ENCODE measurements at regions of chr10 and their contacts with region 1.

Region 1: GRCh38 chr10:110547139-110547761 is 20.2 kb upstream of the SMC3 start:
- DNase-seq: no peak
- ATAC-seq: peak; percentile 77
- H3K4me3 Mint-ChIP-seq: no peak overlapping the region
- H3K27ac Mint-ChIP-seq: no peak overlapping the region
- H3K4me1 Mint-ChIP-seq: peaks cover 10% of the 10 kb centered on the region
- H3K27me3 Mint-ChIP-seq: peaks cover 21% of the 10 kb centered on the region
- CTCF ChIP-seq: peak; percentile 91

Region 2: DNA sequence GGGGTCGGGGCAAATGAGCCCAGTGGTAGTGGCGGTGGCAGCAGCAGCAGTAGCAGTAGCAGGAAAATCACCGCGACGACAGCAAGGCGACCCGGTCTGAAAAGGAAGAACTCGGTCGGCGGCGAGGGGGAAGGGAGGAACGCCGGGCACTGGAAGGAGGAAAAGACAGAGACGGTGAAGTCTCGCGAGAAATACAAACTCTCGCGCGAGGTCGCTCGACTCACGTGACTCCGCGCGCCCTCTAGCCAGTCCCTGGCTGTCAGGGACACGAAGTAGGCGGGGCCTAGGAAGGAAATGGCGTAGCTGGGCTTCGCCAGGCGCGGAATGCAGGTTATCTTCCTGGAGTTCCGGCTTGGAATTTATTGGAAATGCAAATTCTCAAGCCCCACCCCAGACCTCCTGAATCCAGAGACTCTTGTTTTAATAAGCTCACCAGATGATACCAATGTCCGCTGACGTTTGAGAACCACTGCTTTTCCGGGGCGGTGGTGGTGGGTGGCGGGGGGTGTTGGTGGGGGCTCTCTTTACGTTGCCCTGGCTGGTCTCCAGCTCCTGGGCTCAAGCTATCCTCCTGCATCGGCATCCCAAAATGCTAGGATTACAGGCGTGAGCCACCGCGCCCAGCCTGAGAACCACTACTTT is 242.3 kb before region 1 on chr10 and contains the start of gene SMNDC1:
- CTCF ChIA-PET with region 1: interaction called, 55 read pairs
- POLR2A ChIA-PET with region 1: interaction called, 4 read pairs
- intact Hi-C with region 1: loop called (anchors 1 kb)
- DNase-seq: peak; percentile 98
- ATAC-seq: peak; percentile 93
- H3K4me3 Mint-ChIP-seq: peak within 1 kb of the TSS; percentile 93
- H3K27ac Mint-ChIP-seq: peak within 1 kb of the TSS; percentile 98
- H3K4me1 Mint-ChIP-seq: peaks cover 43% of the 10 kb centered on the region
- H3K27me3 Mint-ChIP-seq: no peaks in the 10 kb centered on the region
- CTCF ChIP-seq: no peak
- total RNA-seq, gene SMNDC1: 39.7 to 42.4 TPM

Region 3: GRCh38 chr10:110354322-110354766 is 192.9 kb before region 1 on chr10:
- CTCF ChIA-PET with region 1: interaction called, 38 read pairs
- POLR2A ChIA-PET with region 1: interaction called, 3 read pairs
- intact Hi-C with region 1: loop called (anchors 5 kb)
- DNase-seq: peak; percentile 95
- ATAC-seq: peak; percentile 40
- H3K4me3 Mint-ChIP-seq: no peak overlapping the region
- H3K27ac Mint-ChIP-seq: peak overlapping the region; percentile 87
- H3K4me1 Mint-ChIP-seq: peaks cover 60% of the 10 kb centered on the region
- H3K27me3 Mint-ChIP-seq: peaks cover 2% of the 10 kb centered on the region
- CTCF ChIP-seq: peak; percentile 90

Region 4: DNA sequence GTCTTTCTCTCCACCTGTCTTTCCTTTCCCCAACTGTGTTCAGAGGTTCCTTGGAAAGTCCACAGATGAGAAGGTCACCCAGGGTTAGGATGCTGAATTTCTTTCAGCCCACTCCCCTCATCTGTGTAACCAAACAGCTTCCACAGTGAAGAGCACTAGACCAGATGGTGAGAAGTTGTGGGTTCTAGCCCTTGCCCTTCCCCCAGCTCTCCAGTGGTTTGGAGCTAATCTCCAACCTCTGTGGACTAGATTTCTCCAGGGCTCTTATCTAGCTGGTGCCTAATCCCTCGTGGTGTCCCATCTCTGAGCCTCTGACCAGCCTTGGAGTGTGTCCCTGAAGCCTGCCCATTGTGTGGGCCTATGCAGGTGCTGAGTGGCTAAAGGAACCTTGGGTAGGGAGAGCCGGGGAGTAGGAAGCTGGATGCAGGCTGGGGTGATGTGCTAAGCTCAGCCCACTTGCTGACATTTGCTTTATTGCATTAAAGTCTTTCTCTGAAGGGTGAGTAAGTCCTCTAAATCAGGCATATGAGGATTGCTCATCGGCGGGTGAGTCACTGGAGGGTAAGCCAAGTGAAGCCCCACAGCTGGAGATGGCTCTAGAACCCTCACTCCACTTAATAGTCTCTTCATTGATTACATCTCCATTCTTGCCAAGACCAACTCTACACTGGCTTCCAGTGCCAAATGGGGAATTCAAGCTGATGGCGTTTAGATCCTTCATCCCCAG is 34.6 kb before region 1 on chr10:
- CTCF ChIA-PET with region 1: interaction called, 12 read pairs
- POLR2A ChIA-PET with region 1: interaction called, 3 read pairs
- intact Hi-C with region 1: no loop called
- DNase-seq: peak; percentile 89
- ATAC-seq: peak; percentile 98
- H3K4me3 Mint-ChIP-seq: no peak overlapping the region
- H3K27ac Mint-ChIP-seq: peak overlapping the region; percentile 88
- H3K4me1 Mint-ChIP-seq: peaks cover 57% of the 10 kb centered on the region
- H3K27me3 Mint-ChIP-seq: no peaks in the 10 kb centered on the region
- CTCF ChIP-seq: no peak

Region 5: DNA sequence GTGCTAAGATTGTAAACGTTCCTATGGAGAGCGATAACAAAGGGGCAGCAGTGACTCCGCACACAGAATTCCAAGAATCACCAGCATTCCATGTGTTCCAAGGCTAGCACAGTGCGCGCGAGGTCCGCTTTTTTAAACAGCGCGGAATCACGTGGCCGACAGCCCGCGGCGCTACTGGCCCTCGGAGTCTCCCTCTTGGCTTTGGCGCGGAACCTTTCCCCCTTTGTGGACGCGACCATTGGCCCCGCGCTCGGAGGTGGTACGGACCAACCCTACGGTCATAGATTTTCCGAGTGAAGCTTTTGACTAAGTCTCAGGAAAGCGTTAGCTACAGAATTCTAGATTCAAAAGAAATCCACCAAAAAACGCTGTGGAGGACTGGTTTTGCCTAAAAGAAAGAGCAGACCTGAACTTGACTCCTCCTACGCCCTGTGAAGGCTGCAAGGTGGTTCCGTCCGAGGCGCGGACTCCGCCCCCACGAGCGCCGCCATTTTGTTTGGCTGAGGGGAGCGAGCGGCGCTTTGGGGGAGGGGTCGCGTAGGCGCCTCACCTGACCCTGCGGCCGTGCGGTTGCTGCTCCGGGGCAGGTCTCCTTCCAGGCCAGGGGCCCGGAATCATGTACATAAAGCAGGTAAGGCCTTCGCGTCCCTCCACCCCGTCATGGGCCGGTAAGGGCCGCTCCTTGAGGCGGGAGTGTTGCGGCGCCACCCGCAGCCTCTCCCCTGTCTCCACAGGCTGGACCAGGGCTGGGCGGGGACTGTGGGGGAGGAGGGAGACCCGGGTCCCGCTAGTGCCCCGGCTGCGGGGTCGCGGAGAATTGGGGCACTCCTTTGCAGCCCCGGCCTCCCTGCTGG is 20.2 kb after region 1 on chr10 and contains the start of gene SMC3:
- CTCF ChIA-PET with region 1: interaction called, 15 read pairs
- POLR2A ChIA-PET with region 1: interaction called, 11 read pairs
- intact Hi-C with region 1: no loop called
- DNase-seq: peak; percentile 93
- ATAC-seq: peak; percentile 86
- H3K4me3 Mint-ChIP-seq: peak within 1 kb of the TSS; percentile 98
- H3K27ac Mint-ChIP-seq: peak within 1 kb of the TSS; percentile 99
- H3K4me1 Mint-ChIP-seq: peaks cover 32% of the 10 kb centered on the region
- H3K27me3 Mint-ChIP-seq: peaks cover 20% of the 10 kb centered on the region
- CTCF ChIP-seq: no peak
- total RNA-seq, gene SMC3: 69.7 to 71.2 TPM

Region 6: GRCh38 chr10:110686949-110687348 is 139.7 kb after region 1 on chr10:
- CTCF ChIA-PET with region 1: no interaction called
- POLR2A ChIA-PET with region 1: no interaction called
- intact Hi-C with region 1: no loop called
- DNase-seq: no peak
- ATAC-seq: no peak
- H3K4me3 Mint-ChIP-seq: no peak overlapping the region
- H3K27ac Mint-ChIP-seq: no peak overlapping the region
- H3K4me1 Mint-ChIP-seq: no peaks in the 10 kb centered on the region
- H3K27me3 Mint-ChIP-seq: peaks cover 6% of the 10 kb centered on the region
- CTCF ChIP-seq: no peak

Region 7: DNA sequence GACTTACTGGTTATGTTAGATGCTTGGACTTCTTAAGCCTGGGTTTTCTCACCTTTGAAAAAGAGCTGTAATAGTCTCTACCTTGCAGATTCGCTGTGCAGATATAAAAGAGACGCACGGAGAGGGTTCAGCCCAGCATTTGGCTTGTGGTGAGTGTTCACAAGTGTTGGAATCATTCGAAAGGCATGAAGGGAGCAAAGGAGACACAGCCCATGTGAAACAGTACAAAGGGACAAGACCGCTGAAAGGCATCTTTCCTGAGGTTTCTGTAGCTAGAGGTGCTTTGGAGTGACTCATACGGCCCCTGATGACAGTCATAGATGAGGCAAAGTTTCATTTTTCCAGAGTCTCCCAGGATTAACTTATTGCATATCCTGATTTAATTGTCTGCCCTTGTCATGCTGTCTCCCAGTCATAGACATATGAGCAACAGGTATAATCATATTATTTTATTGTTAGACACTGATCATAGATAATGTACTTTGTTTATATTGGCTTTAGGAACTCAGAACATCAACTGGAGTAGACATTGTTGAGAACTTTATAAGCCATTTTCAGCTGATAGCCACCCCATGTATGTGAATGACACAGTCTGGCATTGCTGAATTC is 700.6 kb after region 1 on chr10:
- CTCF ChIA-PET with region 1: no interaction called
- POLR2A ChIA-PET with region 1: no interaction called
- intact Hi-C with region 1: no loop called
- DNase-seq: no peak
- ATAC-seq: no peak
- H3K4me3 Mint-ChIP-seq: no peak overlapping the region
- H3K27ac Mint-ChIP-seq: no peak overlapping the region
- H3K4me1 Mint-ChIP-seq: no peaks in the 10 kb centered on the region
- H3K27me3 Mint-ChIP-seq: peaks cover 12% of the 10 kb centered on the region
- CTCF ChIP-seq: no peak

Measured in activated CD8-positive, alpha-beta T cell treated with anti-CD3 and anti-CD28 coated beads for 36 hours (primary cell).